Tibial artery (tissue), 4 donors: ENCODE measurements at regions of chr11 and their contacts with region 1.

Region 1: DNA sequence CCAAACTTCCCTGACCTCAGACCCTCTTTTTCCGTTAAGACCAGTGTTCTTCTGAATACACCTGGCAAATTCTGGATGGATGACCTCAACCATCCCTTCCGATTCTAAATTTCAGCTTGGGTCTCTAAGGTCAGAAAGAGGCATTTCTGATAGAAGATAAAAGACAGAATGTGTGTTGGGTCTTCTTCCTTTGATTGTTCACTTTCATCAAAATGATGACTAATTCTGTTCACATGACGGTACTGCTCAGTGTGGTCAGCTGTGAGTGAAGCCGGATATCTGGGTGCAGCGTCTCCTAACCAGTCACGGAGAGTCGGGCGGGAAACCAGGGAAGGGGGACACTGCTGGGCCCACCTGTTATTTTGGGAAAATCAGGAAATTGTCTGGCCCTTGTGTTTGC is 151.6 kb upstream of the NAV2 start:
- DNase-seq: no peak
- H3K4me3 ChIP-seq: no peak overlapping the region
- H3K27ac ChIP-seq: no peak overlapping the region
- H3K4me1 ChIP-seq: peaks cover 0 to 27% (median 16%) of the 10 kb centered on the region in 4 donors
- H3K27me3 ChIP-seq: no peaks in the 10 kb centered on the region
- CTCF ChIP-seq: no peak

Region 2: GRCh38 chr11:19742588-19743292 is 181.7 kb after region 1 on chr11:
- intact Hi-C with region 1: loop called (anchors 1 kb)
- DNase-seq: peak; percentile 79 to 87
- H3K4me3 ChIP-seq: no peak overlapping the region
- H3K27ac ChIP-seq: peak overlapping the region; percentile 3 to 37
- H3K4me1 ChIP-seq: peaks cover 3 to 66% (median 30%) of the 10 kb centered on the region in 4 donors
- H3K27me3 ChIP-seq: no peaks in the 10 kb centered on the region
- CTCF ChIP-seq: peak; percentile 84 to 91

Region 3: DNA sequence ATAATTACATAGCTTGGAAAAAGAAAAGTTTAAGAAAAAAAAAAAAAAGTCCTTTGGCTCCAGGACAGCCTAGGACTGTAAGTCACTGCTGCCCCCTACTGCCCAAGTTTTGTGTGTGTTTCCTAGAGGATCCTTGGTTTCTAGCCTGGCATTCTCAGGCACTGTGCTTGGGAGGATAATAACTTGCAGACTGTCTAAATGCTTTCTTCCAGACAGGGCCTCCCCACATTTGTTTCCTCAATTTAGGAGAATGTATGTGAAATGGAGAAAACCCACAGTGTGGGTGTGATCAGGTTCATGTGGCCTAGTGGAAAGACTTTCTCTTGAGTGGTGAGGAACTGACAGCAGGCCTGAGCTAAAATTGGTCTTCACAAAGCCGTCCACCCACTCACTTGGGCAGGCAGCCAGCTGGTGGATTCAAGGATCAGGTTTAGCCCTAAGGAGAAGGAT is 342.6 kb after region 1 on chr11:
- intact Hi-C with region 1: loop called (anchors 5 kb)
- DNase-seq: peak; percentile 80 to 82
- H3K4me3 ChIP-seq: no peak overlapping the region
- H3K27ac ChIP-seq: peak overlapping the region; percentile 2 to 49
- H3K4me1 ChIP-seq: peaks cover 0 to 69% (median 23%) of the 10 kb centered on the region in 4 donors
- H3K27me3 ChIP-seq: no peaks in the 10 kb centered on the region
- CTCF ChIP-seq: peak; percentile 74 to 82